ENCODE measurements at regions of chr1 and their contacts with region 1.

Region 1: GRCh38 chr1:85553416-85554335 is 26.9 kb upstream of the CCN1 start:
- DNase-seq: no peak
- ATAC-seq: peak; percentile 2
- H3K4me3 ChIP-seq: no peak overlapping the region
- H3K27ac ChIP-seq: peak overlapping the region; percentile 91
- H3K4me1 ChIP-seq: peaks cover 72% of the 10 kb centered on the region
- H3K27me3 ChIP-seq: no peaks in the 10 kb centered on the region
- CTCF ChIP-seq: no peak; the same call in 1 of the 2 replicates

Region 2: GRCh38 chr1:84781946-84782771 is 771.5 kb before region 1 on chr1:
- CTCF ChIA-PET with region 1: no interaction called
- POLR2A ChIA-PET with region 1: no interaction called
- in situ Hi-C with region 1: no loop called
- intact Hi-C with region 1: no loop called
- DNase-seq: peak; percentile 69
- ATAC-seq: peak; percentile 90
- H3K4me3 ChIP-seq: peak overlapping the region; percentile 4 to 44; a peak in 3 of 4 replicates
- H3K27ac ChIP-seq: peak overlapping the region; percentile 35; the same call in 1 of the 2 replicates
- H3K4me1 ChIP-seq: peaks cover 15% of the 10 kb centered on the region
- H3K27me3 ChIP-seq: no peaks in the 10 kb centered on the region; the same call in 1 of the 2 replicates
- CTCF ChIP-seq: peak; percentile 100

Region 3: DNA sequence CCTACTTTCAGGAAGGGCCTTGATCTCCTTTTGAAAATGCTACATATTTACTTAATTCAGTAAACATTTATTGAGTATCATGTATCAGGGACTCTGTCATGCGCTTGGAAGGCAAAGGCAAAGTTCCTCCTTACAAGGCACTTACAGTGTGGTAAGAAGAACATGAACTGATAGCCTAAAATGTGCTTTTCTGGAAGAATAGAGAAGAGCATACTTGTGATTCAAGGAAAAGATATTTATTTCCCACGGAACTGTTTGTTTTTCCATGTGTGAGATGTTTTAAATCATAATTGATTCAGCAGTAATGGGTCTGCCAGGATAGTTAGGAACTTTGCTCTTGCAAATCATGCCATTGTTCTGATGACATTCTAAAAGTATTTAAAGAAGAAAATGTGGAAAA is 264.7 kb after region 1 on chr1:
- CTCF ChIA-PET with region 1: no interaction called
- POLR2A ChIA-PET with region 1: interaction called, 13 read pairs
- in situ Hi-C with region 1: no loop called
- intact Hi-C with region 1: no loop called
- DNase-seq: peak; percentile 79
- ATAC-seq: no peak
- H3K4me3 ChIP-seq: no peak overlapping the region
- H3K27ac ChIP-seq: no peak overlapping the region
- H3K4me1 ChIP-seq: no peaks in the 10 kb centered on the region
- H3K27me3 ChIP-seq: no peaks in the 10 kb centered on the region
- CTCF ChIP-seq: no peak; the same call in 1 of the 2 replicates